Sciatic nerve (tissue), 2 donors: ENCODE measurements at regions of chr7 and their contacts with region 1.

Region 1: GRCh38 chr7:99040104-99040958 is 103.6 kb downstream of the SMURF1 start:
- DNase-seq: peak; percentile 88
- ATAC-seq: peak; percentile 84

Region 2: GRCh38 chr7:99312316-99313203 is 272.2 kb after region 1 on chr7:
- intact Hi-C with region 1: loop called (anchors 5 kb)
- DNase-seq: peak; percentile 85
- ATAC-seq: peak; percentile 80

Region 3: GRCh38 chr7:99324559-99324958 is 284.2 kb after region 1 on chr7:
- intact Hi-C with region 1: loop called (anchors 5 kb)
- DNase-seq: no peak
- ATAC-seq: no peak